PC-9 (cell line): ENCODE measurements at regions of chr6 and their contacts with region 1.

Region 1: GRCh38 chr6:133887156-133887879 is 1.6 kb upstream of the TCF21 start:
- DNase-seq: no peak
- H3K4me3 ChIP-seq: no peak overlapping the region
- H3K27ac ChIP-seq: no peak overlapping the region
- H3K4me1 ChIP-seq: peaks cover 7% of the 10 kb centered on the region; the same call in 1 of the 2 replicates
- H3K27me3 ChIP-seq: no peaks in the 10 kb centered on the region
- CTCF ChIP-seq: no peak

Region 2: DNA sequence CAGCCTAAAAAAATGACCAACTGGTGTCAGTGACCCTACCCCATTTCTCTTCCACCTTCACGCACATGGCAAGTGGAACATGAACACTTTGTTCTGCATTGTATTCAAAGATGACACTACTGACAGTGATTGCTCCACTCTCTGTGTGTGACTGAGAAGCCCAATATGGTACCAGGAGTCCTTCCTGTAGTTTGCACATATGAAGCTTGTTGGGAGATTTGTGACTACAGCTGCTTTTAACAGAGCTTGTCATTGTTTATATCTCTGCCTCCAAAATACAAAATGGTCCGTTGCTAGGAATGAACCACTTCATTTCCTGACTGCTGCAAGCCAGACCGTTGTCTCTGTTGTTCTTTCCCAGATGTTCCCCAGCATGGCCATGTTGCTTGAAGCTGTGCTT is 138.7 kb before region 1 on chr6:
- CTCF ChIA-PET with region 1: no interaction called
- POLR2A ChIA-PET with region 1: no interaction called
- intact Hi-C with region 1: no loop called
- DNase-seq: no peak
- H3K4me3 ChIP-seq: no peak overlapping the region
- H3K27ac ChIP-seq: no peak overlapping the region
- H3K4me1 ChIP-seq: peaks cover 21% of the 10 kb centered on the region
- H3K27me3 ChIP-seq: no peaks in the 10 kb centered on the region
- CTCF ChIP-seq: no peak

Region 3: GRCh38 chr6:134063966-134064445 is 176.7 kb after region 1 on chr6:
- CTCF ChIA-PET with region 1: no interaction called
- POLR2A ChIA-PET with region 1: no interaction called
- intact Hi-C with region 1: no loop called
- DNase-seq: peak; percentile 62 to 77
- H3K4me3 ChIP-seq: no peak overlapping the region
- H3K27ac ChIP-seq: no peak overlapping the region
- H3K4me1 ChIP-seq: peaks cover 13% of the 10 kb centered on the region
- H3K27me3 ChIP-seq: no peaks in the 10 kb centered on the region
- CTCF ChIP-seq: peak; percentile 95

Region 4: DNA sequence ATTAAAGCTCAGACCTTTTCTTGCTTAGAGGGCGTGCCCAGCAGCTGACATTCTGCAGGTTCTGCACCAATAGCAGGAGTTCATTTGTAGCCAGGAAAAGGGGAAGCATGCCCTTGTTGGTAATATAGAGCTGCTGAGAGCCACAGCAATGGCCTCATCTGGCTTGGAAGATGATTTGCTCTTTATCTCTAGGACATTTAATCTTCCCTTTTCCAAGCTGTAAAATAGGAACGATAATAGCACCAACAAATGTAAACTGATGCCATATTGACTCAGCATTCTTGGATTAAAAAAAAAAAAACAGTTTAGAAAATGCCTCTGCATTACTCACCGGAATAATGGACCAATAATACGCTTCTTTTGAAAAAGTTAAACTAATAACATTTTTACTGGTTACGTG is 258.5 kb after region 1 on chr6:
- CTCF ChIA-PET with region 1: no interaction called
- POLR2A ChIA-PET with region 1: interaction called, 12 read pairs
- intact Hi-C with region 1: no loop called
- DNase-seq: no peak
- H3K4me3 ChIP-seq: no peak overlapping the region
- H3K27ac ChIP-seq: no peak overlapping the region
- H3K4me1 ChIP-seq: no peaks in the 10 kb centered on the region
- H3K27me3 ChIP-seq: no peaks in the 10 kb centered on the region
- CTCF ChIP-seq: no peak